Gastrocnemius medialis (tissue), 4 donors: ENCODE measurements at regions of chr11 and their contacts with region 1.

Region 1: DNA sequence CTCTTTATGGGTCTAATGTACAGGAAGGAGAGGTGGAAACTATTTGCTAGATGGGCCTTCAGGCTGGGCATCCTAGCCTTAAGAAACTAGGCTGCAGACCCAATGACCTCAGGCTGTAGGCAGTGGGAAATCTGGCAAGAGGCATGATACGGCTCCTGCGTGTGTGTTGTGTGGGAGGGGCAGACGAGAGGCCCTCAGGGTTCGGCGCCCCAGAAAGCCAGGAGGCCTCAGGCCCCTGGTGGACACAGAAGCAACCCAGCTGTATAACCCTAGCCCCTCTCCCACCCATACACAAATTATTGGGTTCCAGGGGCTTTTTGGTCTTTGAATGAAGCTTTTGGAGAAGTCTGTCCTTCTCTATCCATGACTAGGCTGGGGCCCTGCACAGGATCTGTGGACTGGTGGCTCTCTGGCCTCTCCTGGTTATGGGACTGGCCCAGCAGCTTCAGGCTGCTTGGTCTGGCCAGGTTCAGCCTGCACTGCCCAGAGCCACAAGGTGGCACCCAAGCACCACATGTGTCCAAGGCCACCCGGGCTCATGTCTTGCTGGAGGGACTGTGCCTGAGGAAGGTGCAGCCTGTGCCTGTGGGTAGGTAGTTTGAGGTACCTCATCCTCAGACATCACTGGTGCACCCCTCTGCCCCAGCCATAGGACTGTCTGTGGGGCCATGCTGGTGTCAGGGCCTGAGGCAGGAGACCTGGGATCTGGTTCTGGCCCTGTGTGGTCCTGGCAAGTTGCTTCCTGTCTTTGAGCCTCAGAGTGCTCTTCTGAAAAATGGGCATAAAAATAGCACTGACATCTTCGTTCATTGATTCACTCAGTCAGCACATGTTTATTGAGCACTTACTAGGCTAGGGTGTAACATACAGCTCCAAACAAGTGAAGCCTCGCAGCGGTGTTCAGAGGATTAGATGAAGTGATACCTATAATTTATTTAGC is 87.5 kb downstream of the RRM1 start:
- DNase-seq: no peak
- ATAC-seq: peak in 1 of 2 donors; percentile 51
- H3K4me3 ChIP-seq: no peak overlapping the region
- H3K27ac ChIP-seq: no peak overlapping the region
- H3K4me1 ChIP-seq: no peaks in the 10 kb centered on the region
- H3K27me3 ChIP-seq: no peaks in the 10 kb centered on the region
- CTCF ChIP-seq: peak in 4 of 5 experiments; percentile 11 to 46 (median 28)
- POLR2A ChIP-seq: no peak

Region 2: DNA sequence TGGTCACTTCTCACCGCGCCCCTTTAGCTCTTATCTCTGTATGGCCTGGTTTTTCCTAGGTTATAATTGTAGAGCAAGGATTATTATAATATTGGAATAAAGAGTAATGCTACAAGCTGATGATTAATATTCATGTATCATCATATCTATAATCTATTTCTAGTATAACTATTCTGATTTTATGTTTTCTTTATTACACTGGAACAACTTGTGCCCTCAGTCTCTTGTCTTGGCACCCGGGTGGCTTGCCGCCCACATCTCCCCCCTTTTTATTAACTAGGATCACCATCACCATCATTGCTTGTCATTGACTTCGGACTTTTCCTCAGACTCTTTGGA is 311.4 kb after region 1 on chr11:
- in situ Hi-C with region 1: loop called (anchors 5 kb)
- intact Hi-C with region 1: loop called (anchors 1 kb)
- DNase-seq: no peak
- ATAC-seq: no peak
- H3K4me3 ChIP-seq: no peak overlapping the region
- H3K27ac ChIP-seq: no peak overlapping the region
- H3K4me1 ChIP-seq: no peaks in the 10 kb centered on the region
- H3K27me3 ChIP-seq: peaks cover 0 to 4% (median 0%) of the 10 kb centered on the region in 3 donors
- CTCF ChIP-seq: peak in 1 of 5 experiments; percentile 8
- POLR2A ChIP-seq: no peak

Region 3: GRCh38 chr11:4589017-4589416 is 407.0 kb after region 1 on chr11:
- in situ Hi-C with region 1: no loop called
- intact Hi-C with region 1: no loop called
- DNase-seq: no peak
- ATAC-seq: no peak
- H3K4me3 ChIP-seq: no peak overlapping the region
- H3K27ac ChIP-seq: no peak overlapping the region
- H3K4me1 ChIP-seq: no peaks in the 10 kb centered on the region
- H3K27me3 ChIP-seq: no peaks in the 10 kb centered on the region
- CTCF ChIP-seq: no peak
- POLR2A ChIP-seq: no peak